ENCODE measurements at regions of chr4 and their contacts with region 1.

Region 1: DNA sequence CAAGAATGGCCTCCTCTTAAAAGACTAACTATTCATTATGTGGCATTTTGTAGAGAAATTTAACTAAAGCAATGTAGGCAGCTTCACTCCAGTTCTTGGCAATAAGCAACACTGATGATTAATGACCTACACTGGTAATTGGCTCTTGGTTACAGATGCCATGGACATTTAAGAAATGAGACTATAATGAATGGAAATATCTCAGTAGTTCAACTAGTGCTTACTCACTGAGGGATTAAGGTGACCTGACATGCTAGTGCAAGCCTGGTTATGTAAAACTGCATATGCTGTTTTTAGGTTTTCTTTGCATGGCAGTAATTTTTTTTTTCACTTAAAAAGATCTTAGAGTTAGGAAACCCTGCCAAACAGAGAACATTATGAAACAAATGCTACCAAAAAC is 152.7 kb upstream of the AADAT start:
- DNase-seq: no peak
- ATAC-seq: no peak

Region 2: DNA sequence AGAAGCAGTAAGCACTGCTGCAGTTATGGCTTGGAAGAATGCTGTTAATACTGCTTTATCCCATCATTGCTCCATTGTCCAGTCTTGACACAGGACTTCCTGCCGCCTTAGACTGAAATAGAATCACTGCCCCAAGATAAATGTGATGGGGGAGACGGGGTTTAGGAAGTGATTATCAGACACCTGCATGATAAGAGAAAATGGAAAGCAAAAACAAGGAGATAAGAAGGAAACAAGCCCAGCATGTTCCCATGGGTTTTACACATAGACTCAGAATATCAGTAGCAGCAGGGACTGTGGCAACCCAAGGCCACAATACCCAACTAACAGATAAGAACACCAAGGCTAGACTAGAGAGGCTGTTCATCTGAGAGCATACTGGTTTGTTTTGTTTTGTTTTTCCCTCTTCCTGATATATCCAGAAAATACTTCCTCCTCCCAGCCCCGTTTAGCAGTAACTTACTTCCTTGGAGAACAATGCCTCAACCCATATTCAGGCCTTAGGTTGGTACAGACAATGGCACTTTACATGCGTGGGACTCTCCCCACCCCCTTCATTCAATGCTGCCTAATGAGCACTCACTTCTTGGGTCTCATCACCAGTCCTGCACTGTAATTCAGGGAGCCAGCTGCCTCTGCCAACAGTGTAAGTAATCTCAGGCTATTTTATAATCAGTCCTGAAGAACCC is 1465.0 kb before region 1 on chr4:
- intact Hi-C with region 1: loop called (anchors 5 kb)
- DNase-seq: no peak
- ATAC-seq: no peak